ENCODE measurements at regions of chr5 and their contacts with region 1.

Region 1: DNA sequence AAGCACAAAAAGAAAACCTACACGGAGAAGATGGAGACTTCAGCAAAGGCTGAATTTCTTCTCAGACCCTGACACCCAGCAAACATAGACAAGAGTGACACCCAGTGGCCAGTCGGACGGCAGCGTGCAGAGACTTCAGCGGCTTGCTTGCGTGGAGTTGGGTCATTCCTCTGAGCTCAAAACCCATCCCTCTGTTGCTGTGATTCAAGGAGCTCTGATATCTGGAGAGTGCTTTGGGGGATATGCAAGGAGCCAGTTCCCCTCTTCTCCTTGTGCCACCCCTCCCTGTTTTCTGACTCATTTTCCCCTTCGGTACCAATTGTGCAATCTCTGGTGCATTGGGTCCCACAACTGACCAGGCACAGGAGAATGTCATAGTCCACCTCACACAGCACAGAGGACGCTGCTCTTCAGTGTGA is 27.5 kb downstream of the SH3TC2 start:
- DNase-seq: peak; percentile 69
- ATAC-seq: peak; percentile 54
- H3K4me3 ChIP-seq: no peak overlapping the region
- H3K4me3 Mint-ChIP-seq: no peak overlapping the region
- H3K27ac ChIP-seq: no peak overlapping the region
- H3K27ac Mint-ChIP-seq: no peak overlapping the region
- H3K4me1 ChIP-seq: no peaks in the 10 kb centered on the region
- H3K4me1 Mint-ChIP-seq: no peaks in the 10 kb centered on the region
- H3K27me3 ChIP-seq: no peaks in the 10 kb centered on the region
- H3K27me3 Mint-ChIP-seq: peaks cover 18% of the 10 kb centered on the region
- CTCF ChIP-seq: peak; percentile 83

Region 2: DNA sequence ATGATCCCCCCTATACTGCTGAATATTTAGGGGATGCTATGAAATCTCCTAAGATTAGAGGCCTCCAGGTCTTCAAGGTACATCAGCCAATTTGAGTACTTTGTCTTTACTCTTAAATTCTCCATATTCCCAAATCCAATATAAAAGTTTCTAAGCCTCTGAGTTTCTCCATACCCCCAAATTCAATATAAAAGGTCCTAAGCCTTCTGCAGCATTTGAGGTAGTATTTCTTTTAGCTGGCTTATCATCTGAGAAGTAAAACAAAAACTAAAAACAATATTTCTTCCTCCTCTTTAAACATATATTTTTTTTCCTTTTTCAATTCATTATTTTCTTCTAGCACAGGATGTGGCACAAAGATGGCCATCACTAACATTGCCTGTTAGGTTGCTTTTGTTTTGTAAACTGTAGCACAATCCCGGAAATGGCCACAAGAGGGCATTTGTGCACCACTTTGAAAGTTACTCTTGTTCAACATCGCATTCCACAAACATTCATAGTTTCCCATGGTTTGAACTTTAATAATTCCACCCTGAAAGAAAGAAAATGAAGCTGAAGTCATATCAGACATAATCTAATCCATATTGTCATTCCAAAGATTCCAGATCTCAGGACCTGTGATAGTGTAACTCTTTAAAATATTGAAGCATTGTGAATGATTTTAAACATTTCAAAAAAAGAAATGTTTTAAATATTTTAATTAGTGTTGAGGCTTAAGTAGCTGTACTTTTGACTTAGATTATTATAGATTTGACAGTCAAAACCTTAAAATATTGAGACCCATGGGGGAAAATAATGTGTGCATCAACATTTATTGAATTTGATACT is 1177.9 kb before region 1 on chr5:
- CTCF ChIA-PET with region 1: no interaction called
- POLR2A ChIA-PET with region 1: no interaction called
- intact Hi-C with region 1: loop called (anchors 5 kb)
- DNase-seq: peak; percentile 27
- ATAC-seq: no peak
- H3K4me3 ChIP-seq: no peak overlapping the region
- H3K4me3 Mint-ChIP-seq: no peak overlapping the region
- H3K27ac ChIP-seq: no peak overlapping the region
- H3K27ac Mint-ChIP-seq: no peak overlapping the region
- H3K4me1 ChIP-seq: no peaks in the 10 kb centered on the region
- H3K4me1 Mint-ChIP-seq: no peaks in the 10 kb centered on the region
- H3K27me3 ChIP-seq: no peaks in the 10 kb centered on the region
- H3K27me3 Mint-ChIP-seq: peaks cover 23% of the 10 kb centered on the region
- CTCF ChIP-seq: peak; percentile 88

Region 3: DNA sequence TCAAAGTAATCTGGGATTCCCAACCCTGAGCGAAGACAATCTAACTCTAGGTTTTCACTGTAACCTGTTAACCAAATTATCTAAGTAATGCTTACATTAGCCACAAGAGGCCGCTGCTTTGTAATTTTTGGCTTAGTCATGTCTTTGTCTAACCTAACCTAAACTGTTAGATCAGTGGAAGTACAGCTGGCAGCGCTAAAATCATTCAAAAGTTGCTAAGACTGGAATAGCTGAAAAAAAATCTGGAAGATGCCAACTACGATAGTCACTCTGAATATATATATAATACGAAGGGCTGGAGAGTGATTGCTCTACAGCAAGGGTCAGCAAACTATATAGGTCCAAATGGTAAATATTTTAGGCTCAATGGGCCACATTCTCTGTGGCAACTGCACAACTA is 591.4 kb before region 1 on chr5:
- CTCF ChIA-PET with region 1: interaction called, 24 read pairs
- POLR2A ChIA-PET with region 1: no interaction called
- intact Hi-C with region 1: no loop called
- DNase-seq: peak; percentile 57
- ATAC-seq: peak; percentile 54
- H3K4me3 ChIP-seq: no peak overlapping the region
- H3K4me3 Mint-ChIP-seq: no peak overlapping the region
- H3K27ac ChIP-seq: no peak overlapping the region
- H3K27ac Mint-ChIP-seq: no peak overlapping the region
- H3K4me1 ChIP-seq: no peaks in the 10 kb centered on the region
- H3K4me1 Mint-ChIP-seq: no peaks in the 10 kb centered on the region
- H3K27me3 ChIP-seq: no peaks in the 10 kb centered on the region
- H3K27me3 Mint-ChIP-seq: no peaks in the 10 kb centered on the region
- CTCF ChIP-seq: peak; percentile 88

Region 4: GRCh38 chr5:148585988-148586387 is 449.4 kb before region 1 on chr5:
- CTCF ChIA-PET with region 1: no interaction called
- POLR2A ChIA-PET with region 1: no interaction called
- intact Hi-C with region 1: no loop called
- DNase-seq: no peak
- ATAC-seq: no peak
- H3K4me3 ChIP-seq: no peak overlapping the region
- H3K4me3 Mint-ChIP-seq: no peak overlapping the region
- H3K27ac ChIP-seq: no peak overlapping the region
- H3K27ac Mint-ChIP-seq: no peak overlapping the region
- H3K4me1 ChIP-seq: no peaks in the 10 kb centered on the region
- H3K4me1 Mint-ChIP-seq: no peaks in the 10 kb centered on the region
- H3K27me3 ChIP-seq: no peaks in the 10 kb centered on the region
- H3K27me3 Mint-ChIP-seq: no peaks in the 10 kb centered on the region
- CTCF ChIP-seq: no peak

Region 5: GRCh38 chr5:148740966-148741742 is 294.2 kb before region 1 on chr5:
- CTCF ChIA-PET with region 1: interaction called, 373 read pairs
- POLR2A ChIA-PET with region 1: no interaction called
- intact Hi-C with region 1: loop called (anchors 1 kb)
- DNase-seq: peak; percentile 72
- ATAC-seq: peak; percentile 28
- H3K4me3 ChIP-seq: no peak overlapping the region
- H3K4me3 Mint-ChIP-seq: no peak overlapping the region
- H3K27ac ChIP-seq: no peak overlapping the region
- H3K27ac Mint-ChIP-seq: no peak overlapping the region
- H3K4me1 ChIP-seq: peaks cover 0 to 3% of the 10 kb centered on the region in 2 donors
- H3K4me1 Mint-ChIP-seq: peaks cover 10% of the 10 kb centered on the region
- H3K27me3 ChIP-seq: no peaks in the 10 kb centered on the region
- H3K27me3 Mint-ChIP-seq: peaks cover 4% of the 10 kb centered on the region
- CTCF ChIP-seq: peak; percentile 87

Region 6: DNA sequence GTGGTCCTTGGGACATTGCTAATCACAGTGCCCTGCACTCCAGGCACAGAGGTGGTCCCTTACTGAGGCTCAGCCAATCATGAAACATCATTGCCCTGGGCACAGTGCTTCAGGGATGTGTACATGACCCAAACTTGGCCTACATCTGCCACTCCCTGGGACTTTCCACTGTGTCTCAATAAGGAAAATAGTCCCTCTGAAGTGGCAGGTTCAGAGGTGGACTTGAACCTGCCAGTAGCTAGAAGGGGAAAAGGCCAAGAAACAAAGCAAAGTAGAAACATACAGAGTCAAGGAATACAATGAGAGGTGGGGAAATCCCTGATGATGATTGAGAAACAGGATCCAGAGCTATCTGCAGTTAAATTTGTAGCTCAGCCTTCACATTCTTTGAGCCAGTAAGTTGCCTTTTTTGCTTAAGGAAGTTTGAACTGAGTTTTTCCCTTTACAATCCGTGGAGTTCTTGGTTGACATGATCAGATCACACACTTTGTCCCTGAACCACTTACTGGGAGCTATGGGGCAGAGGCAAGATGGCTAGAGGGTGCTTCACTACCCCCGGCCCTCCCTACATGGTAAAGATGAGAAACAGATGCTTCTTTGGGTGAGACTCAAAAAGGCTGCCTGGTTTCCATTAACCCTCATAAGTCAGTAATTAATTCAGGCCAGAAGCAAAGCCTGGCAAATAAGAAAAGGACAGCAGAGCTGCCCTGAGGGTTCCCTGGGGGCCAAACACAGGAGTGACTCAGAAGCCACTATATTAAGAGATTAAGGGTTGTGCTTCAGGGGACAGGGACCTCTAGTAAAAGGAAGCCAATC is 30.1 kb before region 1 on chr5:
- CTCF ChIA-PET with region 1: interaction called, 10 read pairs
- POLR2A ChIA-PET with region 1: no interaction called
- intact Hi-C with region 1: no loop called
- DNase-seq: no peak
- ATAC-seq: no peak
- H3K4me3 ChIP-seq: no peak overlapping the region
- H3K4me3 Mint-ChIP-seq: no peak overlapping the region
- H3K27ac ChIP-seq: no peak overlapping the region
- H3K27ac Mint-ChIP-seq: no peak overlapping the region
- H3K4me1 ChIP-seq: no peaks in the 10 kb centered on the region
- H3K4me1 Mint-ChIP-seq: no peaks in the 10 kb centered on the region
- H3K27me3 ChIP-seq: no peaks in the 10 kb centered on the region
- H3K27me3 Mint-ChIP-seq: peaks cover 19% of the 10 kb centered on the region
- CTCF ChIP-seq: no peak

Region 7: DNA sequence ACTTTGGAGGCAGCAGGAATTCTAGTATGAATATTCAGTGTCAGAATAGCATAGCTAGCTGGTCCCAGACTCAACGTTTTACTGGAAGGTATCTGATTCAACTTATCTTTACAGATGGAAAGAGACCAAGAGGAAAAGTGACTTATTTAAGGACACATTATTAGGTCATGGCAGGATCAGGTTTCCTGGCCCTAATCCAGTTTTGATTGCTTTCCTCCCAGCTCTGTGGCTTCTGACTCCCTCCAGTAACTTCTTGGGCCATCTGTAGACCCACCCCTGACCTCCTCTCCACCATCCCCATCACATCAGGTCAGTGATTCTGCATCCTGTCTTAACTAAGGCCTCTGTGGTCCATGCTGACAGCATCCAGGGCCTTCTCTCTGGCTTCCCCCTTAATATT is 10.9 kb before region 1 on chr5:
- CTCF ChIA-PET with region 1: interaction called, 16 read pairs
- POLR2A ChIA-PET with region 1: no interaction called
- intact Hi-C with region 1: no loop called
- DNase-seq: no peak
- ATAC-seq: no peak
- H3K4me3 ChIP-seq: no peak overlapping the region
- H3K4me3 Mint-ChIP-seq: no peak overlapping the region
- H3K27ac ChIP-seq: no peak overlapping the region
- H3K27ac Mint-ChIP-seq: no peak overlapping the region
- H3K4me1 ChIP-seq: no peaks in the 10 kb centered on the region
- H3K4me1 Mint-ChIP-seq: no peaks in the 10 kb centered on the region
- H3K27me3 ChIP-seq: no peaks in the 10 kb centered on the region
- H3K27me3 Mint-ChIP-seq: peaks cover 9% of the 10 kb centered on the region
- CTCF ChIP-seq: no peak

Region 8: DNA sequence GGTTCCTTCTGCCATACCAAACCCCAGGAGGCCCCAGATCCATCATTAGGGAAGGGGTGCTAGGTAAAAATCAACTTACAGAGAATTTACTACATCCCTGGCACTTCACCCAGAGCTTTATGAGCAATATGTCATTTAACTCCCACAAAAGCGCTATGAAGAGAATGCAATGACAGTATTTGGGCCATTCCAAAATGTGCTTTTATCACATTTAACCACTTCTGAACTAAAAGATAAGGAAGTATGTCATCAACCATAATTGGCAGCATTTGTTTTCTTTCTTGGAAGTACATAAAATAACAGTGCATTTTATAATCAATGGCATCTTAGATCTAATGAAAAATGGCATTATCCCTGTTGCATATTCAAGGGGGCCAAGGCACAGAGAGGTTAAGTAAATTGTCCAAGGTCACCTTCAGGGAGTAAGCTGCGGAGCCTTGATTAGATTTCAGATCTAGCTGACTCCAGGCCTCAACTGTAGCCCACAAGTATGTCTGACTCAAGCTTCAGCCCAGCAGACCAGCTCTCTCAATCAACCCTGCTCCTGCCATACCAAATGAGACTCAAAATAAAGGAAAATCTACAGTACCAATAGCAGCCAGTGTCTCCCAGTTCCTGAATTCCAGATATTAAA is 10.9 kb after region 1 on chr5:
- CTCF ChIA-PET with region 1: interaction called, 15 read pairs
- POLR2A ChIA-PET with region 1: no interaction called
- intact Hi-C with region 1: no loop called
- DNase-seq: no peak
- ATAC-seq: no peak
- H3K4me3 ChIP-seq: no peak overlapping the region
- H3K4me3 Mint-ChIP-seq: no peak overlapping the region
- H3K27ac ChIP-seq: no peak overlapping the region
- H3K27ac Mint-ChIP-seq: no peak overlapping the region
- H3K4me1 ChIP-seq: no peaks in the 10 kb centered on the region
- H3K4me1 Mint-ChIP-seq: no peaks in the 10 kb centered on the region
- H3K27me3 ChIP-seq: no peaks in the 10 kb centered on the region
- H3K27me3 Mint-ChIP-seq: peaks cover 7% of the 10 kb centered on the region
- CTCF ChIP-seq: no peak